ENCODE measurements at regions of chr4 and their contacts with region 1.

Region 1: GRCh38 chr4:40056716-40057585 is at the start of gene N4BP2:
- DNase-seq: peak; percentile 77
- ATAC-seq: peak; percentile 64
- H3K4me3 Mint-ChIP-seq: peak within 1 kb of the TSS; percentile 87
- H3K27ac Mint-ChIP-seq: peak within 1 kb of the TSS; percentile 99
- H3K4me1 Mint-ChIP-seq: peaks cover 33% of the 10 kb centered on the region
- H3K27me3 Mint-ChIP-seq: no peaks in the 10 kb centered on the region
- CTCF ChIP-seq: no peak
- total RNA-seq, gene N4BP2: 28.5 to 31.7 TPM (median 28.9 TPM) in 3 replicates

Region 2: DNA sequence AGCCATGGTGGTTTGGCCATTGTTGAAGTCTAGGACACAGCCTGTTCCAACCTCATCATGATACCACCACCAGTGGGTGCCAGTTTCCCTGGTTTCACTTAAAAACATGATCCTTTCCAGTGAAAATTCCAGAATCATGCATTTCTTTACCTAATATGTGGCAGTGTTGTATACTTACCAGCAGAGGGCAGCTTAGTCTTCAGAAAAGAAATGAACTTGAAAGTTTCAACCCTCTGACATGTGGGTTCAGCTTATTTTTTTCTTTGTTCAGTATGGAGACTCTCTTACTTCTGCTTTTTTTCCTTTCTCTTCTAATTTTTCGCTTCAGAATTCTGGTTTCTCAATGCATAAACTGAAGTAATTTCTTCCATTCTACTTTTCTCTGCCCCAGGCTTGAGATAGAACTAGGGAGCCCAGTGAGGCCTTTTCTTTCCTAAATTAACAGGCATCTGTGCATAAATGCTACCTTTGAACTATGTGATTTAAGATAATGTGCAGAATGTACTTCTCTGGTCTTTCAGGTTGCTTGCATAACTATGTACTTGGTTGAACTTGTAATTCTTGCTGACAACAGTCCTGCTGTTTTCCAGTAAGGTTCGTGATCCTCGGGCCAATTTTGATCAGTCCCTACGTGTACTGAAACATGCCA is 587.4 kb before region 1 on chr4:
- CTCF ChIA-PET with region 1: interaction called, 10 read pairs
- POLR2A ChIA-PET with region 1: no interaction called
- DNase-seq: peak; percentile 36
- ATAC-seq: peak; percentile 97
- H3K4me3 Mint-ChIP-seq: no peak overlapping the region
- H3K27ac Mint-ChIP-seq: peak overlapping the region; percentile 97
- H3K4me1 Mint-ChIP-seq: peaks cover 4% of the 10 kb centered on the region; the same call in 1 of the 2 replicates
- H3K27me3 Mint-ChIP-seq: no peaks in the 10 kb centered on the region
- CTCF ChIP-seq: peak; percentile 73

Region 3: GRCh38 chr4:39638354-39639240 is 418.4 kb before region 1 on chr4 and contains the start of gene SMIM14:
- CTCF ChIA-PET with region 1: no interaction called
- POLR2A ChIA-PET with region 1: interaction called, 11 read pairs
- DNase-seq: peak; percentile 94
- ATAC-seq: peak; percentile 72
- H3K4me3 Mint-ChIP-seq: peak within 1 kb of the TSS; percentile 92
- H3K27ac Mint-ChIP-seq: peak within 1 kb of the TSS; percentile 99
- H3K4me1 Mint-ChIP-seq: peaks cover 53% of the 10 kb centered on the region
- H3K27me3 Mint-ChIP-seq: no peaks in the 10 kb centered on the region
- CTCF ChIP-seq: no peak
- total RNA-seq, gene SMIM14: 32.3 to 40.1 TPM (median 38.5 TPM) in 3 replicates

Region 4: DNA sequence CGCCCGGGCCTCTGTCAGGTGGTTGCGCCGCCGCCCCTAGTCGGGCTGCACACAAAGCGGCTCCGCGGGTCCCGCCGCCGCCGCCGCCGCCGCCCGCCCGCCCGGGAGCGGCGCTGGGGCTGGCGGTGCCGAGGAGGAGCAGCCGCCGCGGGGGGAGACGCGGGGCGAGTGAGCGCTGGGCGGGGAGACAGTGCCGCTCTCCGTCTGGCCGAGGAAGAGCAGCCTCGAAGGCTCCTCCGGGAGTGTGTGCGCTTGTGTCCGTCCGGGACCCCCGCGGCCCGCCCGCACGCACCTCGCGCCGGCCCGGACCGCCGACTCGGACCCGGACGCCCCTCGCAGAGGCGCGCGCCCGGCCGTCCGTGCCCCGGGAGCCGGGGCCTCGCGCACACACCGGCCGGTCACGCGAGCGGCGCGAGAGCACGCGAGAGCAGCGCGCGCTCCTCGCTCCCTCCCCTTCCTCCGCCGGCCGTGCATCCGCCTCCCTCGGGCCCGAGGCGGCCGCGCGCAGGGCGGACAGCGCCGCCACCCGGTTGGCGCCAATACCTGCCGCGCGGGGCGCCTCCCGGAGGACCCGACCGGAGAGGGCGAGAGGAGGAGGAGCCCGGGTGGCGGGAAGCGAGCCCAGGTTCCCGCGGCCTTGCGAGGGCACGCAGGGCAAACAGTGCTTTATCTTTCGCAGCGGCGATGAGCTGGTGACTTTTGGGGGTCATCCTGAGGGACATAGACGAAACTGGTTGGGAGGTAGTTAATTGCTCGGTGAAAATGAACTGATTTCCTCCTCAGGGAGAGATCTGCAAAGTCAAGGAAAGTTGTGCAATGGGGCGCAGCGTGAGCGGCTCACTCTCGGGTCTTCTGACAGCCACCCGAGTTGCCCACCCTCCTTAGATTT is 79.2 kb before region 1 on chr4 and contains the start of gene PDS5A:
- CTCF ChIA-PET with region 1: interaction called, 13 read pairs
- POLR2A ChIA-PET with region 1: no interaction called
- DNase-seq: peak; percentile 88
- ATAC-seq: peak; percentile 88
- H3K4me3 Mint-ChIP-seq: peak within 1 kb of the TSS; percentile 81
- H3K27ac Mint-ChIP-seq: peak within 1 kb of the TSS; percentile 94
- H3K4me1 Mint-ChIP-seq: peaks cover 19% of the 10 kb centered on the region
- H3K27me3 Mint-ChIP-seq: no peaks in the 10 kb centered on the region
- CTCF ChIP-seq: peak; percentile 87
- total RNA-seq, gene PDS5A: 61.7 to 64.6 TPM (median 63.0 TPM) in 3 replicates

Region 5: GRCh38 chr4:40118861-40119260 is 61.9 kb after region 1 on chr4:
- CTCF ChIA-PET with region 1: interaction called, 13 read pairs
- POLR2A ChIA-PET with region 1: no interaction called
- DNase-seq: no peak
- ATAC-seq: no peak; the same call in 1 of the 2 replicates
- H3K4me3 Mint-ChIP-seq: peak overlapping the region; percentile 29
- H3K27ac Mint-ChIP-seq: peak overlapping the region; percentile 63
- H3K4me1 Mint-ChIP-seq: peaks cover 32% of the 10 kb centered on the region
- H3K27me3 Mint-ChIP-seq: no peaks in the 10 kb centered on the region
- CTCF ChIP-seq: no peak

Region 6: DNA sequence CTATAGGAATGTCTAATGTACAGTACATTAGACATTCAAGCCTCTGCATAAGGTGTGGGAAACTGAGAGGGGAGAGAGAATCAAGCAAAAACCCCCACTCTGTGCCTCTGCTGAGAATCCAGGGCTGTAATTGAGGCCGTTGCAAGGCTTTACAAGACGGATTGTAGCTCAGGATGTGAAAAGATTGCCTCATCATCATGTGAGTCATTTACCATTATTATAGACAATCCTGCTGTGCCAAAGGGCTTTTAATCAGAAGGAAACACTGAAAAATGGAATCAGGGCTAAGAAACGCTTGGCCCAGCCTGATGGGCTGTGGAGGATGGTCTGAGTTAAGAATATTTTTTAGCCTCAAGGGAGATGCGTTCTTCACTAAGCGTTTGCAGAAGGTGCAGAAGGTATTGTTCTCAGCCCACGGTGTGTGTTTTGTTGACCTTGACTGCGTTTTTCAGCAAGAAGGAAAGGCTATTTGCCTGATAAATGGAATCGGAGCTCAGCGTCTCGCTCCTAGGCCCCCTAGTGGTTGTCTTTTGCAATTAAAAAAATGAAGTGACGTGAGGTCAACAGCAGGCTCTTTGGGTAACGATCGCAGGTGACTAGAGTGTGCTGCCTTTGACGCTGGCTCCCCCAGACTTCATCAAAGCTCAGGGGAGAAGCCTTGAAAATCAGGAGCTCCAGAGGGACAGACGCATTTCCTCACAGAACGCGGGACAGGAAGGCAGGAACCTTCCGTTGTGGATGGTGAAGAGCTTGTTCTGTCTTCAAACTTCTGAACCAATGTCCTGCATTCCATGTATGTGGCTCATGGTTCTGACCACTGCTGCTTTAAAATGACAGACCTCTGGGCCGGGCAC is 260.1 kb after region 1 on chr4:
- CTCF ChIA-PET with region 1: interaction called, 13 read pairs
- POLR2A ChIA-PET with region 1: no interaction called
- DNase-seq: peak; percentile 60
- ATAC-seq: peak; percentile 89
- H3K4me3 Mint-ChIP-seq: peak overlapping the region; percentile 3; the same call in 1 of the 2 replicates
- H3K27ac Mint-ChIP-seq: peak overlapping the region; percentile 87
- H3K4me1 Mint-ChIP-seq: peaks cover 36% of the 10 kb centered on the region
- H3K27me3 Mint-ChIP-seq: no peaks in the 10 kb centered on the region
- CTCF ChIP-seq: peak; percentile 89

Measured in WTC11 (cell line).